Tibial artery (tissue), 4 donors: ENCODE measurements at regions of chr14 and their contacts with region 1.

Region 1: DNA sequence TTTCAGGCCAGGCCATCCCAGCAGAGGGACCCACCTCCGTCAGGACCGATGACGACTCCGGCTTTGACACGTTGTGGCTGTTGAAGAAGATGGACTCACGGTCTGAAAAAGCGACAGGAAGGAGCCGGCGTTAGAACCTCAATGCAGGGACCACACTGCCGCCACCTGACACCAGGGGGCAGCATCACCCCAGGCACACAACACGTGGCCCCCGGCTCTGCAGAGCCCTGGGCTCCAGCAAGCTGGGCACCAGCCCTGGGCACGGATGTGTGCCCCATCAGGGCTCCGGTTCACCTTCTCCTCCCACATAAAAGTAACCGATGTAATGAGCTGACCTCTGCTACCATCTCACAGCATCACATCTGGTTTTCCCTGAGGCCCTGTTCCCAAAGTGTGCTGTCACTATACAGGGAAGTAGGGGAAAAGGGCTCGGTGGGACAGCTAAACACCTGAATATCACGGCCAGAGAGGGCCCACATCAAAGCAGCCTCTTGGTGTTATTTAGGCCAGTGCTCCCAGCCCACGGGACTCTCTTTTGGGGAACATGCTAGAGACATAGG is 29.0 kb downstream of the CHGA start:
- DNase-seq: peak; percentile 77 to 88
- H3K4me3 ChIP-seq: peak overlapping the region; percentile 9 to 26
- H3K27ac ChIP-seq: peak overlapping the region; percentile 72 to 85
- H3K4me1 ChIP-seq: peaks cover 0 to 43% (median 37%) of the 10 kb centered on the region in 4 donors
- H3K27me3 ChIP-seq: no peaks in the 10 kb centered on the region
- CTCF ChIP-seq: peak; percentile 98

Region 2: GRCh38 chr14:93142854-93143652 is 191.1 kb after region 1 on chr14:
- intact Hi-C with region 1: loop called (anchors 5 kb)
- DNase-seq: no peak
- H3K4me3 ChIP-seq: no peak overlapping the region
- H3K27ac ChIP-seq: no peak overlapping the region
- H3K4me1 ChIP-seq: peaks cover 0 to 3% (median 0%) of the 10 kb centered on the region in 4 donors
- H3K27me3 ChIP-seq: no peaks in the 10 kb centered on the region
- CTCF ChIP-seq: no peak

Region 3: GRCh38 chr14:93173943-93174395 is 222.0 kb after region 1 on chr14:
- intact Hi-C with region 1: loop called (anchors 10 kb)
- DNase-seq: no peak
- H3K4me3 ChIP-seq: no peak overlapping the region
- H3K27ac ChIP-seq: no peak overlapping the region
- H3K4me1 ChIP-seq: no peaks in the 10 kb centered on the region
- H3K27me3 ChIP-seq: peaks cover 0 to 14% of the 10 kb centered on the region in 2 donors
- CTCF ChIP-seq: no peak

Region 4: DNA sequence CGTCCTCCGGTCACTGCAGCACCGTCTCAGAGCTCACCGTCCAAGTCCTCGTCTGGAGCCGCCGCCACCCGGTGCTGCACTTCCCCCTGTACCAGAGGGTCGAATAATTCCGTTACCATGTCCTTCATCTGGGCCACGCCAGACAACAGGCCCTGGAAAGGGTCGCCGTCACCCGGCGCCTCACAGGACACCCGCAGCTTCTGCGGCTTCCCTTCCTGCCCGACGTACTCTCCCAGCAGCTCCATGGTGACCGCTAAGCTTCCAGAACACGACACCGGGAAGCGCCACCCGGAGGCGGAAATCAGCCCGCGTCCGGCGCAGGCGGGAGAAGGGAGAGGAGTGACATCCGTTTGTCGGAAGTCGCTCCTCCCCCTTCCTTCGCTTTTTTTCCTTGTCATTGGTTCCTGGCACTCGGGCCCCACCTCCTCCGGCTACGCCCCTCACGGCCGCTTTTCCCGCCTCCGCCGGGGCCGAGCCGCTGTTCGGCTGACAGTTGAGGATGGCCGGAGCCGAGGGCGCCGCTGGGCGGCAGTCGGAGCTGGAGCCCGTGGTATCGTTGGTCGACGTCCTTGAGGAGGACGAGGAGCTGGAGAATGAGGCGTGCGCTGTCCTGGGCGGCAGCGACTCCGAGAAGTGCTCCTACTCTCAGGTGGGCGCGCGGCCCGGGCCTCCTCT is 254.9 kb after region 1 on chr14 and contains the starts of genes GON7 and UBR7:
- intact Hi-C with region 1: loop called (anchors 2 kb)
- DNase-seq: peak; percentile 95 to 98
- H3K4me3 ChIP-seq: peak within 1 kb of the TSS; percentile 78 to 84
- H3K27ac ChIP-seq: peak within 1 kb of the TSS; percentile 82 to 90
- H3K4me1 ChIP-seq: peaks cover 0 to 32% (median 21%) of the 10 kb centered on the region in 4 donors
- H3K27me3 ChIP-seq: no peaks in the 10 kb centered on the region
- CTCF ChIP-seq: peak; percentile 15 to 36